CD4-positive, alpha-beta memory T cell (primary cell): ENCODE measurements at regions of chr19 and their contacts with region 1.

Region 1: GRCh38 chr19:21568816-21569493 is 63.6 kb downstream of the ZNF429 start:
- DNase-seq: peak; percentile 85 to 94 (median 88)
- H3K4me3 ChIP-seq: peak overlapping the region in 1 of 2 donors; percentile 36
- H3K4me3 Mint-ChIP-seq: peak overlapping the region; percentile 89 to 100 (median 96)
- H3K27ac ChIP-seq: peak overlapping the region; percentile 48
- H3K27ac Mint-ChIP-seq: peak overlapping the region; percentile 88 to 99 (median 97)
- H3K4me1 ChIP-seq: no peaks in the 10 kb centered on the region
- H3K4me1 Mint-ChIP-seq: peaks cover 7 to 34% (median 19%) of the 10 kb centered on the region in 4 donors
- H3K27me3 ChIP-seq: no peaks in the 10 kb centered on the region
- H3K27me3 Mint-ChIP-seq: no peaks in the 10 kb centered on the region

Region 2: DNA sequence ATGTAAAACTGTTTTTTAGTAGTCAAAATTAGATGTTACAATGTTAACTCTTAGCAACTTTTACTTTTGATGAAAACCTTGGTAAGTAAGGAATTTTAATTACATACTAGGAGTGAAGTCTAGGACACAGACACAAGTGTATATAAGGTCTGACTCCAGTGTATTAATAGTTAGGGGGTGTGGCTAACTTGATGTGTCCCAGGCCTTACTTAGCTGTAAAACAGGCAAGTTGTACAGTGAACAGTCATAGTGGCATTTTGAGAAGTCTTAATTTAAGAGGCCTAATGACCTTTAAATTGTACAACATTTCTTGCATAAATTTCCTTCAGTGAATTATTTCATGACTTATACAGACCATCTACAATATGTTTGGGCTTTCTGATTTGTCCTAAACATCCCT is 420.3 kb before region 1 on chr19:
- CTCF ChIA-PET with region 1: no interaction called
- POLR2A ChIA-PET with region 1: no interaction called
- intact Hi-C with region 1: no loop called
- DNase-seq: no peak
- H3K4me3 ChIP-seq: no peak overlapping the region
- H3K4me3 Mint-ChIP-seq: peak overlapping the region in 1 of 8 donors; percentile 34
- H3K27ac ChIP-seq: no peak overlapping the region
- H3K27ac Mint-ChIP-seq: peak overlapping the region in 1 of 7 donors; percentile 3
- H3K4me1 ChIP-seq: peaks cover 7% of the 10 kb centered on the region
- H3K4me1 Mint-ChIP-seq: peaks cover 8 to 55% (median 37%) of the 10 kb centered on the region in 4 donors
- H3K27me3 ChIP-seq: no peaks in the 10 kb centered on the region
- H3K27me3 Mint-ChIP-seq: no peaks in the 10 kb centered on the region

Region 3: DNA sequence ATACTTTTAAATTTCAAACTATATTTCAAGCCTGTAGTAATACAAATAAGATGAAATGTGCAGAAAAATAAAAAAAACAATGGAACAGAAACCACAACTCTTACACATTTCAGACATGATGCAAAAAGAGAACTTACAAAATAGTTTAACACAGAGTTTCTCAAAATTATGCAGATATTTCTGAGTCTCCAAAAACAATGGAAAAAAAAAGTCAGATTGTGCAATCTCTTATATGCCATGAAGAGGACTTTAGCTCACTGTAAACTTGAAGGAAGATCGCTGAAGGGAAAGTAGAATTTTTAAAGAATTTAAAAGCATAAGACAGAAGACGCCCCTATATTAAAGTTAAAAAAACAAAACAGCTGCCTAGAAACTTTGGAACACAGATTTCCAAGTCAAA is 260.2 kb before region 1 on chr19:
- CTCF ChIA-PET with region 1: no interaction called
- POLR2A ChIA-PET with region 1: no interaction called
- intact Hi-C with region 1: no loop called
- DNase-seq: no peak
- H3K4me3 ChIP-seq: no peak overlapping the region
- H3K4me3 Mint-ChIP-seq: peak overlapping the region in 1 of 8 donors; percentile 56
- H3K27ac ChIP-seq: no peak overlapping the region
- H3K27ac Mint-ChIP-seq: no peak overlapping the region
- H3K4me1 ChIP-seq: no peaks in the 10 kb centered on the region
- H3K4me1 Mint-ChIP-seq: peaks cover 8 to 19% (median 14%) of the 10 kb centered on the region in 4 donors
- H3K27me3 ChIP-seq: no peaks in the 10 kb centered on the region
- H3K27me3 Mint-ChIP-seq: no peaks in the 10 kb centered on the region

Region 4: DNA sequence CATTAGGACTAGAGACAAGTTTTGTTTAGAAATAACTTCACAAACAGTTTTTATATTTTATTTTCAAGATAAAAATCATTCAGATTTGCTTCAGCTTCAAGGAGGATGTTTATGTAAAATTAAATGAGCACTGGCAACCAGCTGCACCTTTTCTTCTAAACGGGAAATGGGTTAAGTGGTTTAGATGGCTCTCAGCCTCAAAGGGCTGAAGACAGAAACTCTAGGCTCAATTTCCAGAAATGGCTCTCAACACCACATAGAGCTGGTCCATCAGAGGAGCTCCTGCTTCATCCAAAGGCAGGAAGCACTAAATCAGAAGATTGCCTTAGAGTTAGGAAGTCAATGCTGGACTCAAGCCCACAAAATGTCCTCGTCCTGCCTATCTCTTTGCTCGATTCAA is 11.1 kb after region 1 on chr19:
- CTCF ChIA-PET with region 1: interaction called, 6 read pairs
- POLR2A ChIA-PET with region 1: interaction called, 29 read pairs
- intact Hi-C with region 1: no loop called
- DNase-seq: no peak
- H3K4me3 ChIP-seq: no peak overlapping the region
- H3K4me3 Mint-ChIP-seq: peak overlapping the region in 3 of 8 donors; percentile 4 to 10 (median 5)
- H3K27ac ChIP-seq: no peak overlapping the region
- H3K27ac Mint-ChIP-seq: peak overlapping the region in 4 of 7 donors; percentile 15 to 75 (median 48)
- H3K4me1 ChIP-seq: peaks cover 14% of the 10 kb centered on the region
- H3K4me1 Mint-ChIP-seq: peaks cover 8 to 43% (median 10%) of the 10 kb centered on the region in 4 donors
- H3K27me3 ChIP-seq: no peaks in the 10 kb centered on the region
- H3K27me3 Mint-ChIP-seq: peaks cover 1 to 4% of the 10 kb centered on the region in 2 donors

Region 5: DNA sequence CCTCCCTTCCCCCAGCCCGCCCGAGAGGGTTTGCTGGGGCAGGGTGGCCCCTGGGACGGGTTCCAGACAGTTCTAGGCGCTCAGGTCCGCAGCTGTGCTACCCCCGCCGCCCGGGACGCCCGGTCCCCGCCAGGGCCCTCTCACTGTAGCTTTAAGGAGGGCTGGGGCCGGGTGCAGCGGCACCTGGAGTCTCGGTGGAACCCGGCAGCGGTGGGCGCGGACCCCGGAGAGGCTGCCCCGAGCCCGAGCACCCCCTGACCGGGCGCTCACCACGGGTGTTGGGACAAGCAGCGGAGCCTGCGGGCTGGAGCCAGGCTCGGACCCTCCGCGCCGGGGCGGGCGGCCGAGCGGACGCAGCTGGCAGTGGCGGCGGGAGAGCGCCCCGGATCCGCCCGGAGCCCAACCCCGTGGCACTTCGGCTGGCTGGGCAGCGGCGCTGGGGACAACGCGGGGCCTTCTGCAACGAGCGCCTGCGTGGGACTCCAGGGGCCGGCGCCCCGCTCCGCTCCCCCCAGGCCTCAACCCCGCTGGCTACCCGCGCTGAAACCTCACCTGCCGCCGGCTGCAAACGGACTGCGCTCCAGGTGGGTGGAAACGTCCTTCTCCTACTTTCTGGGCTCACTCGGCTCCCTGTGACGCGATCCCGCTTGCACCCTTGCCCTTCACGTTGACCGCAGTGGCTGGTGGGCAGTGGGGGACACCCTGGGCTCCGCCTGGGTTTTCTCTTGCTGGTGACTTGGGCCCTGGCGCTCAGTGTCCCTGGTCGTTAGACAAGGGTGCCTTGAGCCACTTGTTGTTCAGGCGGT is 17.6 kb after region 1 on chr19:
- CTCF ChIA-PET with region 1: interaction called, 4 read pairs
- POLR2A ChIA-PET with region 1: interaction called, 22 read pairs
- intact Hi-C with region 1: no loop called
- DNase-seq: no peak
- H3K4me3 ChIP-seq: no peak overlapping the region
- H3K4me3 Mint-ChIP-seq: peak overlapping the region in 7 of 8 donors; percentile 56 to 86 (median 67)
- H3K27ac ChIP-seq: no peak overlapping the region
- H3K27ac Mint-ChIP-seq: peak overlapping the region in 2 of 7 donors; percentile 38 to 68
- H3K4me1 ChIP-seq: peaks cover 15% of the 10 kb centered on the region
- H3K4me1 Mint-ChIP-seq: peaks cover 8 to 38% (median 13%) of the 10 kb centered on the region in 4 donors
- H3K27me3 ChIP-seq: no peaks in the 10 kb centered on the region
- H3K27me3 Mint-ChIP-seq: peaks cover 2 to 6% of the 10 kb centered on the region in 2 donors

Region 6: DNA sequence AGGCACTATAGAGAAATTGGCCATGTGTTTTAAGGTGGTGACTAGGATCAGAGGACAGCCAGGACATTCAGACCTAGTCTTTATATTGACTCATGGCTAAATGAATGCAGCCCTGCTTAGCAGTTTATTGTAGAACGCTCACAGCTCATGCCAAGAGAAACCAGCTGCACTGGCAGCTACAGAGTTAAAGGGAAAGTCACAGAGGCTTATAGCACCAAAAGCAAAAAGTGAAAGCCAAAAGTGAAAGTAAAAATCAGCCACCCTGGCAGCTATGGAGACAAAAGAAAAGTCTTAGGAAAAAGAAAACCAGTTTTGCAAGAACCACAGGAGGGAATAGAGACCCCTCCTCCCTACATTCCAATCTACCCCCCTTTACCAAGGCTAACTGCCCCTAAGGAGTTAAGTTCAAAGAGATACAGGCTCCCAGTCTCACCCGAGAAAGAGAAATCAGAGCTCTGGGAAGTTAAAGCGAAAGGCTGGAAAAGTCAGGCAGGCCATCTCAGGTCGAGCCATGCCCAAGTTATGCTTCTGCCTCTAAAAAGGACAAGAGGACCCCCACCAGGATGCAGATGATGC is 35.5 kb after region 1 on chr19:
- CTCF ChIA-PET with region 1: interaction called, 3 read pairs
- POLR2A ChIA-PET with region 1: interaction called, 14 read pairs
- intact Hi-C with region 1: no loop called
- DNase-seq: peak in 3 of 5 donors; percentile 29 to 35 (median 29)
- H3K4me3 ChIP-seq: peak overlapping the region; percentile 45 to 62
- H3K4me3 Mint-ChIP-seq: peak overlapping the region; percentile 86 to 95 (median 90)
- H3K27ac ChIP-seq: peak overlapping the region; percentile 33
- H3K27ac Mint-ChIP-seq: peak overlapping the region; percentile 70 to 94 (median 93)
- H3K4me1 ChIP-seq: peaks cover 18% of the 10 kb centered on the region
- H3K4me1 Mint-ChIP-seq: peaks cover 10 to 25% (median 19%) of the 10 kb centered on the region in 4 donors
- H3K27me3 ChIP-seq: no peaks in the 10 kb centered on the region
- H3K27me3 Mint-ChIP-seq: no peaks in the 10 kb centered on the region

Region 7: DNA sequence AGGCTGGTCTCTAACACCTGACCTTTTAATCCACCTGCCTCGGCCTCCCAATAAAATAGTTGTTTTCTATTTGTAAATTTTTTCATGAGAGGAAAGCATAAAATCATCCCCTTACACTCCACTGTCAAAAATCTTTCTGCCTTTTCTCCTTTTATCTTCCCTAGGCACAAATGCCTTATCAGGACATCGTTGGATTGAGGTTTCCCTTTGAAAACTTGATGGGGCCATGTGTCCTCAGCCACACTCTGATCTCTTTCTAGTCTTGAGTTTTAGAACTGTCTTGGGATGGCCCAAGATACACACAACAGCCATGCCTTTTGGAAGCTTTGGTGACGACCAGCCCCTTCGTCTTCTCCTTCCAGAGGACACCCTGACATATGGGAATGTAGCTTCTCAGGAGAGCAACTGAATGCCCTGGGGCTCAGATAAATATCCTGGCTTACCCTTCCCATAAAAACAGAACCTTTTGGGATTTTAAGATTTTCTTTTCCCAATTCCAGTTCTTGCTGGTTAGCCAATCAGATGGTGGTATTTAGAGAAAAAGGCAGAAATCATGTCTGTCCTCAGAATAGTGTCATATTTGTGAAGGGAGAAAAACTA is 48.9 kb after region 1 on chr19:
- CTCF ChIA-PET with region 1: no interaction called
- POLR2A ChIA-PET with region 1: no interaction called
- intact Hi-C with region 1: no loop called
- DNase-seq: no peak
- H3K4me3 ChIP-seq: no peak overlapping the region
- H3K4me3 Mint-ChIP-seq: no peak overlapping the region
- H3K27ac ChIP-seq: no peak overlapping the region
- H3K27ac Mint-ChIP-seq: peak overlapping the region in 1 of 7 donors; percentile 49
- H3K4me1 ChIP-seq: no peaks in the 10 kb centered on the region
- H3K4me1 Mint-ChIP-seq: no peaks in the 10 kb centered on the region
- H3K27me3 ChIP-seq: no peaks in the 10 kb centered on the region
- H3K27me3 Mint-ChIP-seq: no peaks in the 10 kb centered on the region

Region 8: DNA sequence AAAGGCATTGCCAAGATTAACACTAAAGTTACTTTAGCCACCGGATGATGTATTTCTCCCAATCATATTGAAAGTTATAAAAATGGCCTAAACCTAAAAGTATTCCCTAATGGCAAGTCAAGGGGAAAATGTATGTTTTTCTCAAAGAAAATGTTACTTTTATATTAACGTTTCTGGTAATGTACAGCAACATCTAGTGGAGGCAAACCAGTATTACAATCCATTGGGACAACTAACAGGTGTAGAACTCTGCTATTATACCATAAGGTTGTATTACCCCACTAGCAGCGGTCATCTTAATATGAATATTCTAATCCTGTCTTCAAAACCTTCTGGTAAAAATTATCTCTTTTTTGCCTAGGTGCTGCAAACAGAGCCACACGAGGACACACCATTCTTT is 129.3 kb after region 1 on chr19:
- CTCF ChIA-PET with region 1: interaction called, 5 read pairs
- POLR2A ChIA-PET with region 1: no interaction called
- intact Hi-C with region 1: loop called (anchors 10 kb)
- DNase-seq: peak; percentile 19 to 29 (median 25)
- H3K4me3 ChIP-seq: no peak overlapping the region
- H3K4me3 Mint-ChIP-seq: no peak overlapping the region
- H3K27ac ChIP-seq: no peak overlapping the region
- H3K27ac Mint-ChIP-seq: no peak overlapping the region
- H3K4me1 ChIP-seq: no peaks in the 10 kb centered on the region
- H3K4me1 Mint-ChIP-seq: no peaks in the 10 kb centered on the region
- H3K27me3 ChIP-seq: no peaks in the 10 kb centered on the region
- H3K27me3 Mint-ChIP-seq: no peaks in the 10 kb centered on the region

Region 9: DNA sequence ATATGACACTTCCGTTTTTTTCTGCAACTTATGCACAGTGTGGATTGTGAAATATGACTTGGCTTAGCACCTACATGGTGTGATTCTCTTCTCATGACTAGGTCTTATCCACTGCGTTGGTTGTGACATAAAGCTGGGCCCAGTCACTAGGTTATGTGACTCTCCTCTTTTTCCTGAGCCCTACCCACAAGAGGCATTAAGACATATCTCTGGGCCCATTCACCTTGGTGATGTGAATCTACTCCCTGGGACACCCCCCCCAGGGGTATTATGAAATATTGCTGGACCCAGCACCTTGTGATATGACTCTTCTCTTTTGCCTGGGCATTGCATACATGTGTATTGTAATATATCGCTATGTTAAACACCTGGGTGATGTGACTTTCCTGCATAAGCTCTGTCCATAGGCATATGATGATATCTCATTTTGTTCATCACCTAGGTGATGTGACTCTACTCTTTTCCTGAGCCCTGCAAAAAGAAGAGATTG is 352.8 kb after region 1 on chr19:
- CTCF ChIA-PET with region 1: no interaction called
- POLR2A ChIA-PET with region 1: no interaction called
- intact Hi-C with region 1: no loop called
- DNase-seq: no peak
- H3K4me3 ChIP-seq: no peak overlapping the region
- H3K4me3 Mint-ChIP-seq: no peak overlapping the region
- H3K27ac ChIP-seq: no peak overlapping the region
- H3K27ac Mint-ChIP-seq: no peak overlapping the region
- H3K4me1 ChIP-seq: no peaks in the 10 kb centered on the region
- H3K4me1 Mint-ChIP-seq: no peaks in the 10 kb centered on the region
- H3K27me3 ChIP-seq: no peaks in the 10 kb centered on the region
- H3K27me3 Mint-ChIP-seq: no peaks in the 10 kb centered on the region